ENCODE measurements at regions of chr7 and their contacts with region 1.

Region 1: DNA sequence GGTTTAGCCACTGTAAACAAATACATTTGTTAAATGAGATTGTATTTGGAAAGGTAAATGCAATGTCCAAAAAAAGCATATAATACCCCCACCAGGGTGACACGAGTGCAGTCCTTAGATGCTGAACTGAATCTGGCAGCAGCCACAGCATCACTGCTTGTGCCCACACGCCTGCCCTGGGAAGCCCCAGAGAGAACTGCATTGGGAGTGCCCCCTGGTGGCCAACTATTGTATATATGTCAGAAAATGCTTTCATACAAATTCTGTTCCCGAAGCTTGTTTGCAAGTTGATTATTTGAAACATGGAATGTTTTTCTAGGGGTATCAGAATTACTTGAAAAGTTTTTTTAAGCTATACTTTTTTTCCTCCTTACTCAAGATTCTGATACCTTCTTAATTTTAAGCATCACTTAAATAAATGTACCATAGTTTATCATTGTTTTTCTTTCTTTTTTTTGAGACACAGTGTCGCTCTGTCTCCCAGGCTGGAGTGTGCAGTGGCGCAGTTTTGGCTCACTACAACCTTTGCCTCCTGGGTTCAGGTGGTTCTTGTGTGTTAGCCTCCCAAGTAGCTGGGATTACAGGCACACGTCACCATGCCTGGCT is 50.1 kb downstream of the LANCL2 start:
- DNase-seq: peak; percentile 78 to 85
- ATAC-seq: peak; percentile 86 to 95 (median 90)
- H3K4me3 ChIP-seq: no peak overlapping the region
- H3K27ac ChIP-seq: no peak overlapping the region
- H3K4me1 ChIP-seq: no peaks in the 10 kb centered on the region
- H3K27me3 ChIP-seq: no peaks in the 10 kb centered on the region
- CTCF ChIP-seq: peak; percentile 91

Region 2: GRCh38 chr7:54778696-54779540 is 636.4 kb before region 1 on chr7:
- intact Hi-C with region 1: loop called in 1 of 2 experiments (anchors 5 kb)
- DNase-seq: no peak
- ATAC-seq: no peak
- H3K4me3 ChIP-seq: no peak overlapping the region
- H3K27ac ChIP-seq: no peak overlapping the region
- H3K4me1 ChIP-seq: no peaks in the 10 kb centered on the region
- H3K27me3 ChIP-seq: peaks cover 0 to 1% (median 0%) of the 10 kb centered on the region in 3 donors
- CTCF ChIP-seq: no peak

Region 3: DNA sequence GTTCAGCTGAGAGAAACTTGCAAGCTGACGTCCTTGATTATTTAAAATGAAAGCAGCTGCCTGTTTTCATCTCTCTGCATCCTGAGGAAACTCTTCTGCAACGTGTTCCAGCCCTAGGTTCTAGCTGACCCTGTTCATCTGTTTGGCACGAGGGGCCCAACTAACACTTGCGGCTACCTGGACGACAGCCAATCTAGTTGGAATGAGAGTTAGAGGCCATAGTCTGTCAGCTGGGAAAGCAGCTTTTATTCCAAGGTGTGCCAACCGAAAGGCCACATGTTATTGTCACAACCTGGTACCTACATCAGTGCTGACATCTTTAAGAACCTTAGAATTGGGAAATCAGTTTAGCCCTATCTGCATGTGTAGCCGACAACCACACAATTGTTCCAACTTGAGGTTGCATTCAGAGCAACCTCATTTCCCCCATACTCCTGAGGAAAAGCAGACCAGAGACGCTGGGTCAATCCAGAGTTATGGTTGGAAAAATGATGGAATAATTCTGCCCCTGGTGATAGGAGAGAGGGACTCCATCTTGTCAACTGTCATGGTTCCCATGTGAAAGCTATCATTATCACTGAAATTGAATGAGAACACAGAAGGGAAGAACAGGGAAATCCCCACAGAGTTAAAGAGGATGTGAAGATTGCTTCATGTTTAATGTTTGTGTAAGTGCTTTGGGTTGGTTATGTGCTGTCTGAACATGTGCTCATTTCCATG is 274.9 kb before region 1 on chr7:
- intact Hi-C with region 1: no loop called
- DNase-seq: no peak
- ATAC-seq: peak; percentile 67 to 78 (median 76)
- H3K4me3 ChIP-seq: no peak overlapping the region
- H3K27ac ChIP-seq: peak overlapping the region; percentile 69
- H3K4me1 ChIP-seq: peaks cover 11% of the 10 kb centered on the region
- H3K27me3 ChIP-seq: no peaks in the 10 kb centered on the region
- CTCF ChIP-seq: no peak

Region 4: DNA sequence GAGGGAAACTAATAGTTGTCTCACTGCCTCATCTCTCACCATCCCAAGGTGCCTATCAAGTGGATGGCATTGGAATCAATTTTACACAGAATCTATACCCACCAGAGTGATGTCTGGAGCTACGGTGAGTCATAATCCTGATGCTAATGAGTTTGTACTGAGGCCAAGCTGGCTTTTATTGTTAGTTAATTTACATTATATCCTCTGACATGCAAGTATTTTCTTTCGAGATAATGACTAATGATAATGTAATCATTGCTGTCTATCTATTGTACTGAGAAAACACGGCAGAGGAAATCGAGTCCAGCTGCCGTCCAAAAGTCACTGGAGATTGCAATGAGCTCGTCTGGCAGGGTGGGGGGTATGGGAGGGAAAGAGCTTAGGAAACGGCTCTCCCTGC is 222.6 kb before region 1 on chr7:
- intact Hi-C with region 1: no loop called
- DNase-seq: no peak
- ATAC-seq: no peak
- H3K4me3 ChIP-seq: no peak overlapping the region
- H3K27ac ChIP-seq: peak overlapping the region; percentile 41
- H3K4me1 ChIP-seq: peaks cover 14% of the 10 kb centered on the region
- H3K27me3 ChIP-seq: no peaks in the 10 kb centered on the region
- CTCF ChIP-seq: no peak

Region 5: GRCh38 chr7:55280031-55280454 is 135.2 kb before region 1 on chr7:
- intact Hi-C with region 1: loop called (anchors 1 to 2 kb)
- DNase-seq: peak; percentile 36 to 63
- ATAC-seq: peak; percentile 88 to 98 (median 90)
- H3K4me3 ChIP-seq: no peak overlapping the region
- H3K27ac ChIP-seq: no peak overlapping the region
- H3K4me1 ChIP-seq: no peaks in the 10 kb centered on the region
- H3K27me3 ChIP-seq: no peaks in the 10 kb centered on the region
- CTCF ChIP-seq: peak; percentile 68

Region 6: GRCh38 chr7:55449205-55449991 is 34.1 kb after region 1 on chr7:
- intact Hi-C with region 1: no loop called
- DNase-seq: no peak
- ATAC-seq: peak in 1 of 4 donors; percentile 30
- H3K4me3 ChIP-seq: no peak overlapping the region
- H3K27ac ChIP-seq: no peak overlapping the region
- H3K4me1 ChIP-seq: no peaks in the 10 kb centered on the region
- H3K27me3 ChIP-seq: no peaks in the 10 kb centered on the region
- CTCF ChIP-seq: no peak